ENCODE measurements at regions of chr21 and their contacts with region 1.

Region 1: GRCh38 chr21:45140346-45140940 is 66.1 kb downstream of the ADARB1 start:
- DNase-seq: peak; percentile 86 to 91
- H3K4me3 ChIP-seq: no peak overlapping the region
- H3K4me3 Mint-ChIP-seq: no peak overlapping the region
- H3K27ac Mint-ChIP-seq: no peak overlapping the region
- H3K4me1 ChIP-seq: peaks cover 10% of the 10 kb centered on the region
- H3K4me1 Mint-ChIP-seq: no peaks in the 10 kb centered on the region
- H3K27me3 ChIP-seq: no peaks in the 10 kb centered on the region
- H3K27me3 Mint-ChIP-seq: no peaks in the 10 kb centered on the region
- CTCF ChIP-seq: peak; percentile 78 to 91

Region 2: DNA sequence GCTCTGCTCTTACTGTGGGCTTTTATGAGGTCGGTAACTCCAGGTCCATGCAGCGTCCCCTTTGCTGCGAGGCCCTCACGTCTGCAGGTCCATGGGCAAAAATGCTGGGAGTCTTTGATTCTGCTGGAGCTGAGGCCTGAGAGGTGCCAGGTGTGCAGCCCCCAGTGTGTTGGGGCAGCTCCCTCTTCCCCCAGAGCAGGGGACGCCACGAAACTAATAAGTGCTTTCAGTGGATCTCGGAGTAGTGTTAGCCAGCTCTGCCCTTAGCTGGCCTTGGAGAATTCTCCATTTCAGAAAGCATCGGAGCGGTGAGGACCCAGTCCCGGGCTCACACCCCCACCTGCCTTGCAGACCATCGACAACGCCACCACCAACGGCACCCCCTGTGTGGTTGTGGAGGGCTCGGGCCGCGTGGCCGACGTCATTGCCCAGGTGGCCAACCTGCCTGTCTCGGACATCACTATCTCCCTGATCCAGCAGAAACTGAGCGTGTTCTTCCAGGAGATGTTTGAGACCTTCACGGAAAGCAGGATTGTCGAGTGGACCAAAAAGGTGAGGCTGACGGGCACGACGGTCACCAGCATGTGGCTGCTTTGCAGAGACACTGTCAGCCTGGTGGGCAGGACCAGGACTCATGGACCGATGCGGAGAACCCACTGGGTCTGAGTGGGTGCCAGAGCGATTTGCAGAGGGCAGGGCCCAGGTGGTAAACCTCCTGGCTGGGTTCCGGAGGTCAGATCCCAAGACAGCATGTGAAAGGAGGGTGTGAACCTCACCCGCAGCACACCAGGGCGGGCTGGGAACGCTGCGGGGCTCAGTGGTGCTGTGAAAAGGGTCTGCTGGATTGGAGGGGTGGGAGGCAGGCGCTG is 761.6 kb before region 1 on chr21:
- CTCF ChIA-PET with region 1: no interaction called
- POLR2A ChIA-PET with region 1: no interaction called
- intact Hi-C with region 1: no loop called
- DNase-seq: peak in 1 of 2 experiments; percentile 21
- H3K4me3 ChIP-seq: no peak overlapping the region
- H3K4me3 Mint-ChIP-seq: no peak overlapping the region
- H3K27ac Mint-ChIP-seq: no peak overlapping the region
- H3K4me1 ChIP-seq: no peaks in the 10 kb centered on the region
- H3K4me1 Mint-ChIP-seq: no peaks in the 10 kb centered on the region
- H3K27me3 ChIP-seq: no peaks in the 10 kb centered on the region
- H3K27me3 Mint-ChIP-seq: no peaks in the 10 kb centered on the region
- CTCF ChIP-seq: no peak

Region 3: GRCh38 chr21:44949779-44950198 is 190.7 kb before region 1 on chr21:
- CTCF ChIA-PET with region 1: interaction called, 32 read pairs
- POLR2A ChIA-PET with region 1: no interaction called
- intact Hi-C with region 1: loop called (anchors 1 kb)
- DNase-seq: peak; percentile 87 to 90
- H3K4me3 ChIP-seq: no peak overlapping the region
- H3K4me3 Mint-ChIP-seq: no peak overlapping the region
- H3K27ac Mint-ChIP-seq: no peak overlapping the region
- H3K4me1 ChIP-seq: peaks cover 5% of the 10 kb centered on the region; the same call in 1 of the 2 replicates
- H3K4me1 Mint-ChIP-seq: no peaks in the 10 kb centered on the region
- H3K27me3 ChIP-seq: no peaks in the 10 kb centered on the region
- H3K27me3 Mint-ChIP-seq: no peaks in the 10 kb centered on the region
- CTCF ChIP-seq: peak; percentile 82 to 91

Region 4: GRCh38 chr21:45074048-45074817 is 66.2 kb before region 1 on chr21 and contains the start of gene ADARB1:
- CTCF ChIA-PET with region 1: interaction called, 6 read pairs
- POLR2A ChIA-PET with region 1: no interaction called
- intact Hi-C with region 1: loop called (anchors 5 kb)
- DNase-seq: peak; percentile 89 to 90
- H3K4me3 ChIP-seq: peak within 1 kb of the TSS; percentile 80
- H3K4me3 Mint-ChIP-seq: peak within 1 kb of the TSS; percentile 88
- H3K27ac Mint-ChIP-seq: peak within 1 kb of the TSS; percentile 100
- H3K4me1 ChIP-seq: peaks cover 13% of the 10 kb centered on the region
- H3K4me1 Mint-ChIP-seq: peaks cover 10% of the 10 kb centered on the region
- H3K27me3 ChIP-seq: no peaks in the 10 kb centered on the region
- H3K27me3 Mint-ChIP-seq: peaks cover 3% of the 10 kb centered on the region
- CTCF ChIP-seq: no peak
- total RNA-seq, gene ADARB1: 25.4 and 25.8 TPM in 2 replicates

Region 5: DNA sequence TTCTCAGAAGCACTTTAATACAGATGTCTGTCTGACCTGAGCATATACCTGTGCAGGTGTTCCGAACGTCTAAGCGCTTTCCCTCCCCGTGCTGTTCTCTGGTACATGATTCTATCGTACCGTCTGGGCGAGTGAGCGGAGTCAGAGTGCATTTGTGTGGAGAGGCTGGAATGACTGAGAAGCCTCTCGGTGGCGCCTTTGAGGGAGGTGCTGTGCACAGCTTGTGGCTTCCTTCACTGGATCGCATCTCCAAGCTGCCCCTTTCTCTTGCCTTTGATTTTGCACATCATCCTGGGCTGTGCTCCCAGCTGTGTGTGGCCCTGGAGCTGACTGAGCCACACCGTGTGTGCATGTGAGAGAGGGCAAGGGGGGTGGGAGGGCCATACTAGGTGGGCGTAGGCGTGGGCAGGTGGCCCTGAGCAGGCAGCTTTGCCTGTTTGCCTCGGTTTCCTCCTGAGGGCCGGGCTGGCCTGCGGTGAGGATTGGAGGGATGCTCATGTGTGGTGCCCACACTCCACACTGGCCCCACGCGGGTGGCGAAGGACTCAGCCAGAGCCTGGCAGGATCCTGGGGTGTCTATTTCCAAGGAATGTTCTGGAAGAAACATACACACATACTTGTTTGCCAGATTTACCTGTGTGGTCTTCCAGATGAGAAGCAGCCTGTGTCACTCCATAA is 39.3 kb after region 1 on chr21:
- CTCF ChIA-PET with region 1: no interaction called
- POLR2A ChIA-PET with region 1: no interaction called
- intact Hi-C with region 1: no loop called
- DNase-seq: no peak
- H3K4me3 ChIP-seq: no peak overlapping the region
- H3K4me3 Mint-ChIP-seq: no peak overlapping the region
- H3K27ac Mint-ChIP-seq: no peak overlapping the region
- H3K4me1 ChIP-seq: no peaks in the 10 kb centered on the region
- H3K4me1 Mint-ChIP-seq: no peaks in the 10 kb centered on the region
- H3K27me3 ChIP-seq: no peaks in the 10 kb centered on the region
- H3K27me3 Mint-ChIP-seq: no peaks in the 10 kb centered on the region
- CTCF ChIP-seq: no peak

Region 6: DNA sequence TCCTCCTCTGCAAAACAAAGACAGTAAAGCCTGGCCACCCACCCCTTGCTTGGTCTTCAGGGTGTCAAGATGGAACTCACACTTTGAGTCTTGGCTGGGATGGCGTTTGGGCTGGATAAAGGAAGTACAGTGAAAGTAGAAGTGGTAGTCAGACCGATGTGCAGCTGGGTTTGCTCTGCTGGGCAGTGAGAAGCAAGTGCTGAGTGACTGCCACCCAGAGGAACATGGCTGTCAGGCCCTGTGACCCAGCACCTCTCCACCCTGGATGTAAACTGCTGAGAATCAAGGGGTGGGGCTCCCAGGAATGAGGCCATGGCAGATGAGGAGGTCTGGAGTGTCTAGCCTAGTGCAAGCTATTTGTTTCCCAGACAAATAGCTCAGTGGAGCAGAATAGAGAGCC is 96.0 kb after region 1 on chr21:
- CTCF ChIA-PET with region 1: interaction called, 6 read pairs
- POLR2A ChIA-PET with region 1: no interaction called
- intact Hi-C with region 1: loop called (anchors 10 kb)
- DNase-seq: peak in 1 of 2 experiments; percentile 31
- H3K4me3 ChIP-seq: no peak overlapping the region
- H3K4me3 Mint-ChIP-seq: no peak overlapping the region
- H3K27ac Mint-ChIP-seq: no peak overlapping the region
- H3K4me1 ChIP-seq: no peaks in the 10 kb centered on the region
- H3K4me1 Mint-ChIP-seq: no peaks in the 10 kb centered on the region
- H3K27me3 ChIP-seq: no peaks in the 10 kb centered on the region
- H3K27me3 Mint-ChIP-seq: peaks cover 6% of the 10 kb centered on the region
- CTCF ChIP-seq: peak in 1 of 2 experiments; percentile 37

Region 7: DNA sequence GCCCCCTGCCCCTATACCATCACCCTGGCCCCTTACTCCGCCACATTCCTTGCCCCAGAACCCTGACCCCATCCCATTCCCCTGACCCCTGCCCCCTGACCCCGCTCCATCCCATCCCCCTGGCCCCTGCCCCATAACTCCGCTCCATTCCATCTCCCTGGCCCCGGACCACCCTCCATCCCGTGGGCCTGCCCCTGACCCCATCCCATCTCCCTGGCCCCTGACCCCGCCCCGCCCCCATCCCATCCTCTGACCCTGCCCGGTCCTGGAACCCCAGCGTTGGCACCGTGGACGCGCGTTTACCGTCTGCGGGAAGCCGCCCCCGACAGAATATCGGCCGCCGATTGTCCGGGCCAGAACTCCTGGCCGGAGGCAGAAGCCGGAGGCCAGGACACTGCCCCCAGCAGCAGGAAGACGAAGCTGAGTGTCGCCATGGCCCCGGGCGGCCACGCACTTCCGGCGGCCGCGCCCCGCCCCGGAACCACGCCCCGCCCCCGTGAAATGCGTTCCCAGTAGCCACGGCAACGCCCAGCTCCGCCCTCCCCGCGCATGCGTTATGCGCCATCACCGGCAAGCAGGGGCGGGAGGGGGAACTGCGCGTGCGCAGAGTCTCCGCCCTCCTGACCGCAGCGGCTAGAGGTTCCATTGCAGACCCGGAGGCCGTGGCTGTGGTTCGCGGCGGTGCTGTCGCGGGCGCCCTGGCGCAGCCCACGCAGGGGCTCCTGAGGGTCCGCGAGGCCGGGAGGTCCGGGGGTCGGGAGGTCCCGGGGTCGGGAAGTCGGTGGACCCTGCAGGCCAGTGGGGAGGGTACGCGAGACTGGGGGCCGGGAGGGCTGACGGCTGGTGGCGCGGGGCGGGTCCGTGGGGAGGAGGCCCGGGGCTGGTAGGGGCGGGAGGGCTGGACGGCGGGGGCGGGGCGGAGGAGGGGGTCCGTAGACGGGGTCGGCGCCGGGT is 147.3 kb after region 1 on chr21 and contains the start of gene POFUT2:
- CTCF ChIA-PET with region 1: interaction called, 13 read pairs
- POLR2A ChIA-PET with region 1: interaction called, 3 read pairs
- intact Hi-C with region 1: loop called (anchors 1 kb)
- DNase-seq: peak; percentile 96 to 98
- H3K4me3 ChIP-seq: peak within 1 kb of the TSS; percentile 91
- H3K4me3 Mint-ChIP-seq: peak within 1 kb of the TSS; percentile 72
- H3K27ac Mint-ChIP-seq: peak within 1 kb of the TSS; percentile 66
- H3K4me1 ChIP-seq: peaks cover 9% of the 10 kb centered on the region
- H3K4me1 Mint-ChIP-seq: peaks cover 6% of the 10 kb centered on the region
- H3K27me3 ChIP-seq: no peaks in the 10 kb centered on the region
- H3K27me3 Mint-ChIP-seq: no peaks in the 10 kb centered on the region
- CTCF ChIP-seq: no peak
- total RNA-seq, gene POFUT2: 32.0 and 36.5 TPM in 2 replicates